Lower leg skin (tissue), 4 donors: ENCODE measurements at regions of chr2 and their contacts with region 1.

Region 1: DNA sequence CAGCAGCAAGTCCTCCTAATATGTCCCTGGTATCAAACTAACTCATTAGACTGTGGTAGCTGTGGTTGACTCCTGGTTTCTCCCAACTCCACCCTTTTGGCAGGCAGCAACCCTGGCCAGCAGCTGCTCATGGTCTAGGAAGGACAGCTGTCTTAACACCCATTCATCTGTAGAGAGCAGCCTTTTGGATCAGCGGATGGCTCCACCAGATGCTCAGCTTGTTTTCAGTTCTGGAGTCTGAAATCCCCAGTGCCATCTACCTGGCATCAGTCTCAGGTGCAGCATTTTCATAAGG is 100.5 kb downstream of the SPOPL start:
- DNase-seq: no peak
- H3K4me3 ChIP-seq: no peak overlapping the region
- CTCF ChIP-seq: no peak
- POLR2A ChIP-seq: no peak

Region 2: GRCh38 chr2:140173790-140174189 is 1571.7 kb after region 1 on chr2:
- intact Hi-C with region 1: loop called (anchors 5 kb)
- DNase-seq: no peak
- H3K4me3 ChIP-seq: no peak overlapping the region
- CTCF ChIP-seq: no peak
- POLR2A ChIP-seq: no peak